ENCODE measurements at regions of chr4 and their contacts with region 1.

Region 1: DNA sequence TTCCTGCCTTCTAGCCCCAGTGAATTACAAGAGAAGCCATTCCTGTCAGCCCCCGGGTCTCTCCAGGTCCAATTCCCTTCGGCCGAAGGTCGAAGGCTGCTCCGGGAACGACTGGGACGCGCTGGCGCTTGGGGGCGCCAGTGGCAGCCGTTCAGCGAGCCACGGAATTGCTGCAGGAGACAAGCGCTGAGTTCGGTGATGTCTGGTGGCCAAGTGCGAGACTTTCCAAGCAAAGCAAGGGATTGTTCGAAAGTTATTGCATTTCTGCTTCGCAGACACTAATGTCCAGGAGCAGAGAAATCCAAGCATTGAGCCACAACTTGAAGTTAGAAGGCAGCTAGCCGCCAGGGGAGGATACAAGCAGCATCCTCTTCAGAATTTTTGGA is 1.1 kb upstream of the DKK2 start:
- DNase-seq: peak in 1 of 2 experiments; percentile 81
- H3K4me3 ChIP-seq: peak overlapping the region; percentile 37 to 63 (median 58); a peak in 7 of 8 replicates
- H3K27ac ChIP-seq: no peak overlapping the region
- H3K4me1 ChIP-seq: peaks cover 0 to 13% (median 2%) of the 10 kb centered on the region in 4 experiments; a peak in 5 of 7 replicates
- H3K27me3 ChIP-seq: peaks cover 25 to 46% (median 40%) of the 10 kb centered on the region in 4 experiments
- CTCF ChIP-seq: peak; percentile 74 to 80 (median 78)
- EP300 ChIP-seq: no peak
- POLR2A ChIP-seq: no peak
- RAD21 ChIP-seq: peak; percentile 75 to 80

Region 2: DNA sequence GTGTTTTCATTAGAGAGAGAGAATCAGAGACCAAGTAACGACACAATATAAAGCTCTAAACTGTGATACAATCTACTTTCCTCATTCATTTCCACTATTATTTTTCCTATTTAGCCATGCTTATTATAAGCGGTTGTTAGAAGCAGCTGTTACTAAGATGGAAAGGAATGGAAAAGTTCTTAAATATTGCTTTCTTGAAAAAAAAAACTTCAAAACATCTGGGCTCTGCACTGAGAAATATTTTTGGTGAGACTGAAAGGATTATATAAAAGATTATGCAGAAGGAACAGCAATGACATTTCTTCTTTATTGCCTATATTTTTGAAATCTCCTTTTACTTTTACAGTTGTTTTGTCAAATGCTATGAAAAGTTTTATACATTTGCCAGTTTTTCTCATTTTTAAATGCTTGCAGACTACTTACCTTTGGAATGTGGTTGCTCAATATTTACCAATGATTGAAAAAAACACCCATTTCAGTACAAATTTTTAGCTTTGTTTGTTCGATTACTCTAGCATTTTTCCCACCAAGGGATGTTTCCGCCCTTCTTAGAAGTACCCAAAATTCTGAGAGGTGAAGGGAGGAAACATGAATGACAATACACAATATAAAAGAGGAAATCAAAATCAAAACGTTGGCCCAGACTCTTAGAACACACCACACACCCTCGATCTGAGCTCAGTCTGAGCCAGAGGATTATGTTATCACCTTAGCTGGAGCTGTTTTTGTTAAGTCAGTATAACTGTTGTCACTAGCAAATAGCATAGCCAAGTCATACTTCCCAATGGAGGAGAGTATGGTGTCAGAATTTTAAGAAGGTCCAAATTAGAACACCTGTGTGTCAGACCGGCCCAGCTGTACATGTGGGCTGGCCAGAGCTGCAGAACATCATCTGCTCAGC is 19.5 kb before region 1 on chr4:
- CTCF ChIA-PET with region 1: interaction called, 11 read pairs
- POLR2A ChIA-PET with region 1: no interaction called
- DNase-seq: no peak
- H3K4me3 ChIP-seq: no peak overlapping the region
- H3K27ac ChIP-seq: no peak overlapping the region
- H3K4me1 ChIP-seq: no peaks in the 10 kb centered on the region
- H3K27me3 ChIP-seq: no peaks in the 10 kb centered on the region
- CTCF ChIP-seq: no peak
- EP300 ChIP-seq: no peak
- POLR2A ChIP-seq: no peak
- RAD21 ChIP-seq: no peak

Region 3: DNA sequence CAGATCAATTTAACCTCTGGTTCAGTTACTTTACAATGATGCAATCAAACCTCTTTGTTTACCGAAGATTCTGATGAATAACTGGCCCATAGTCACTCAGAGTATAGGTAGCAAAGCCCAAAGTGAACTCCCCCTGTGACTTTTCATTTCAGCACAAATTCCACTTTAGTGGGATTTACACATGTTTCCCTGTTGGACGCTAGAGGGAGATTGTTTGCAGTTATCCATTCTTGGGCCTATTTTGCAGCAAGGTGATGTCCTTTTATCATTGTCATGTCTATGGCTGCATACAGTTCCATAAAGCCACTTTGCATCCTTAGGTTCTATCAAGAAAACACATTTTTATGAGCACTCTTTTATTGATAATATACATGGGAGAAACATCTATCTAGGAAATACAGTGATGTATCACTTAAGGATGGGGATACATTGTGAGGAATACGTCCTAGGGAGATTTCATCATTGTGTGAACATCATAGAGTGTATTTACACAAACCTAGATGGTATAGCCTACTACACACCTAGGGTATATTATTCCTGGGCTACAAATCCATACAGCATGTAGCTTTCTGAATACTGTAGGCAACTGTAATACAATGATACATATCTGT is 13.4 kb after region 1 on chr4:
- CTCF ChIA-PET with region 1: interaction called, 13 read pairs
- POLR2A ChIA-PET with region 1: no interaction called
- DNase-seq: no peak
- H3K4me3 ChIP-seq: no peak overlapping the region
- H3K27ac ChIP-seq: no peak overlapping the region
- H3K4me1 ChIP-seq: no peaks in the 10 kb centered on the region
- H3K27me3 ChIP-seq: no peaks in the 10 kb centered on the region
- CTCF ChIP-seq: peak in 2 of 3 experiments; percentile 50 to 64; a peak in 3 of 4 replicates
- EP300 ChIP-seq: no peak
- POLR2A ChIP-seq: no peak
- RAD21 ChIP-seq: peak; percentile 42 to 54

Region 4: DNA sequence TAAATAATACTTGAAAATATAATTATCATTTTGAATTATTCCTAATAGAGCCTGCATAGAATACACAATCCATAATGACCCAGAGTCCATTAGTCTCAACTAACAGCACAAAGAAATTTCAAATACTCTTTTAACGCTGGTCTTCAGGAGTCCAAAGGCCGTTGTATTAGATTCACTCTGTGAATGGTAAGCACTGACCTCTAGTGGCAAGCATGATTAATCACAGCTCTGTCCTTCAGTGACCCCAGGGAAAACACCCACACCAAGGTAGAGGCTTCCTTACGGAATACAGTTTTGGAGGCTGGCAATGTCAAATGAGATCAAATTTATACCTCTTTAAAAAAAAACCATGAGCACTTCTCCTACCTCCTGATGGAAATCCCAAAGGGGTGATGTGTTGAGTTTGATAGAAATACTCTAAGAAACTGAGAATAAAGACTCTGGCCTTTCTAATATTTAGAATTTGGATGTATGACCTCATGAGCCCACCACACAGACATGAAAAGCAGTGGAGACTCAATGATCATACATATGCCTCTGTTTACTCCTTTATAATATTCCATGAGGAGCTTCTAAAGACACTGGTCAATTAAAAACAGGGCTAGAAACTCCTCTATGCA is 146.1 kb after region 1 on chr4:
- CTCF ChIA-PET with region 1: interaction called, 86 read pairs
- POLR2A ChIA-PET with region 1: interaction called, 3 read pairs
- DNase-seq: no peak
- H3K4me3 ChIP-seq: no peak overlapping the region
- H3K27ac ChIP-seq: no peak overlapping the region
- H3K4me1 ChIP-seq: no peaks in the 10 kb centered on the region
- H3K27me3 ChIP-seq: no peaks in the 10 kb centered on the region
- CTCF ChIP-seq: peak; percentile 1 to 78 (median 76)
- EP300 ChIP-seq: no peak
- POLR2A ChIP-seq: no peak
- RAD21 ChIP-seq: peak; percentile 93

Region 5: GRCh38 chr4:107196312-107196711 is 159.1 kb after region 1 on chr4:
- CTCF ChIA-PET with region 1: interaction called, 12 read pairs
- POLR2A ChIA-PET with region 1: no interaction called
- DNase-seq: no peak
- H3K4me3 ChIP-seq: no peak overlapping the region
- H3K27ac ChIP-seq: no peak overlapping the region
- H3K4me1 ChIP-seq: no peaks in the 10 kb centered on the region
- H3K27me3 ChIP-seq: no peaks in the 10 kb centered on the region
- CTCF ChIP-seq: no peak
- EP300 ChIP-seq: no peak
- POLR2A ChIP-seq: no peak
- RAD21 ChIP-seq: no peak

Measured in H1 (cell line).